GM10248 (cell line): ENCODE measurements at regions of chr6 and their contacts with region 1.

Region 1: DNA sequence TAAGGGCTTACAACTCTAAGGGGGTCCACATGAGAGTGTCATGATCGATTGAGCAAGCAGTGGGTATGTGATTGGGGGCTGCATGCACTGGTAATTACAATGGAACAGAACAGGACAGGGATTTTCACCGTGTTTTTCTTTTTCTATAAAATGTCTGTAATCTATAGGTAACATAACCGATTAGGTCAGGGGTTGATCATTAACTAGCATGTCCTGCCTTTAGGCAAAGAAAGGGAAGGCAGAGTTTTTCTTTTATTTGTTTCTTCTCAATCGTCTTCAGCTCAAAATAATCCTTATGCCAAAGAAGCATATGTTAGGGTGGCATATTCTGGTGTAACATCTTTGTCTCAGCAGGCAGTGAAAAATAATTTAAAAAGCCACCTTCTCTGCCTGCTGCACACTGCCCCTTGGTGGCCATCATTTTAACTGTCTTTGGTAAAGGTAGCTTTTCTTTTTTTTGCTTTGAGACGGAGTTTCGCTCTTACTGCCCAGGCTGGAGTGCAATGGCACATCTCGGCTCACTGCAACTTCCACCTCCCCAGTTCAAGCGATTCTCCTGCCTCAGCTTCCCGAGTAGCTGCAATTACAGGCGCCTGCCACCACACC is 9.7 kb upstream of the CEP43 start:
- DNase-seq: peak; percentile 32
- CTCF ChIP-seq: peak; percentile 67

Region 2: GRCh38 chr6:166775180-166776081 is 214.1 kb before region 1 on chr6:
- CTCF ChIA-PET with region 1: interaction called, 68 read pairs
- POLR2A ChIA-PET with region 1: no interaction called
- DNase-seq: peak; percentile 85
- CTCF ChIP-seq: peak; percentile 90

Region 3: GRCh38 chr6:166925141-166925996 is 64.2 kb before region 1 on chr6:
- CTCF ChIA-PET with region 1: interaction called, 13 read pairs
- POLR2A ChIA-PET with region 1: no interaction called
- DNase-seq: no peak
- CTCF ChIP-seq: no peak

Region 4: DNA sequence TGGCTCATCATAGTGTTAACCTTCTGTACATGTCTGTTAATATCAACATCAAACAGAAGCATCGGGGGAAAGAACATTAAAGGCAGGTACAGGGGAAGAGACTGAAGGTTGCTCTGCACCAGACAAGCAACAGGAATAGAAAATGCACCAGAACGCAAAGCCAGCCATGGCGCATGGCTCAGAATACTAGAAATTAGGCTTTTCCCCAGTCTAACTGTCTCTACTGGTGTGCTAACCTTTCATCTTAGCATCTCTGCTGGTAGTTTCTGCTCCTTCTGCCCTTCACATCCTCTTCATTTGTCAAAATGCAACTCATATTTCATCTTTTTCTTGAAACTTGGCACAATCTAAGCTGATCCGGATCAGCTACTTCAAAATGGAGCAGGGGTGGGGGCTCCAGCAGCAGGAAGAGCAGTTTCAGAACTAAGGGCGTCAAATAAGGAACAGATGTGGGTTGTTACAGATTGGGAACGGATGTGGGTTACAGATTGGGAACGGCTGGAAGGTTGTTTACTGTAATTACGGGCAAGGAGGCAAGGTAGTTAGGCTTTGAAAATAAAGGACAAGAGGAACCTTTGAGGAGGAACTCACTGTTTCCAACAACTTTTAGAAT is 20.0 kb before region 1 on chr6:
- CTCF ChIA-PET with region 1: interaction called, 132 read pairs
- POLR2A ChIA-PET with region 1: no interaction called
- DNase-seq: no peak
- CTCF ChIP-seq: no peak

Region 5: DNA sequence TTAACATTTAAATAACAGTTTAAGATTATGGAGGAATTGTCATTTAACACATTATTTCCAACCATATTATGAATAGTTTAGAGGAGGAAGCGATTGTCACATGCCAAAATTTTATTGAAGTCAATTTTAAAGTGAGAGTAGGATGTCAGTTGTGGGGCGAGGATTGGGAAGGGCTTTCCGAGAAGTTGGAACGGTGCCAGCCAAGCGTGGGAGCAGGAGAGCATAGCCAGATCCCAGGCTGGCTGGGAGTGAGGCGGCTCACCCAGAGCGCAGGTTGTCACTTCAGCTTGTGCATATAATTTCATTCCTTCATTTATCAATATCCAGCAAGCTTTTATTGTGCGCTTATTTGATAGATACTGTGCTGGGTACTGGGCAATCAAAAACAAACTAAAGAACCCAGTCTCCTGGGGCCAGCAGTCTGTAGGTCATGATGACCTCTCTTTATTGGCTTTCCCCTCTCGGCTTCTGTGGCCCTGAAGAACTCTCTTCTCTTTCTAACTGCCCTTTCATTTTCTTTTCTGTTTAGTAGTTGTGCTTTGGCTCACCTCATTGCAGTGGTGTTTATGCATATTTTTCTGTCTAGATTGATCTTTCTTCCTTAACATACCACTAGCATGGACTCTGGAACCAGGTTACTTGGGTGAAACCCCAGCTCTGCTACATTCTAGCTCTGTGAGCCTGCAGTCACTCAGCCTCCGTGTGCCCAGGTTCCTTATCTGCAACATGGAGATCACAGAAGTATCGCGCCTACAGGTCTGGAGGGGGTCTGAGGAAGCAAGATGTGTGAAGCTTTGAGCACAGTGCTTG is 16.0 kb after region 1 on chr6:
- CTCF ChIA-PET with region 1: interaction called, 30 read pairs
- POLR2A ChIA-PET with region 1: no interaction called
- DNase-seq: no peak
- CTCF ChIP-seq: no peak

Region 6: GRCh38 chr6:167141667-167142432 is 152.3 kb after region 1 on chr6:
- CTCF ChIA-PET with region 1: interaction called, 38 read pairs
- POLR2A ChIA-PET with region 1: no interaction called
- DNase-seq: peak; percentile 82
- CTCF ChIP-seq: peak; percentile 95